Activated naive CD4-positive, alpha-beta T cell treated with anti-CD3 and anti-CD28 coated beads for 36 hours (primary cell): ENCODE measurements at regions of chr10 and their contacts with region 1.

Region 1: GRCh38 chr10:62816331-62817120 is at the start of gene EGR2:
- DNase-seq: peak; percentile 98
- H3K4me3 Mint-ChIP-seq: peak within 1 kb of the TSS; percentile 95
- H3K27ac Mint-ChIP-seq: peak within 1 kb of the TSS; percentile 98
- H3K4me1 Mint-ChIP-seq: peaks cover 41% of the 10 kb centered on the region
- H3K27me3 Mint-ChIP-seq: peaks cover 14% of the 10 kb centered on the region
- total RNA-seq, gene EGR2: 18.5 to 21.4 TPM

Region 2: DNA sequence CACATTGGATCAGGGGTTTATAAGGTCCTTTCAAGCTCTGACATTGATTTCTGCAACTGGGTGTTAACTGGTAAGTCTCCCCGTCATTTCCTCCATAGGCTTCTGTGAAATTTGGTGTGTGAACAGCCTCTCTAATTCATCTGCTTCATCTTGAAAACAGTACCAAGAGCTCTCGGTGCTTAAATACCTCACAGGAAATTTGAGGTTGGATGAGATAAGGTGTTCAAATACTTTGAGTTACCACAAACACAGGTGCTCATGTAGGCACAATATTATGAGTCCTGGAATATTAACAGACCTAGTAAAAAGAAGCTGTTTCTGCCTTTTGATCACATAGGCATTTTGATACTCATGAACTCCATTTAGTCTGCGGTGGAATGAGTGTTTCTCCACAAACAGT is 633.1 kb before region 1 on chr10:
- CTCF ChIA-PET with region 1: no interaction called
- intact Hi-C with region 1: loop called (anchors 2 kb)
- DNase-seq: peak; percentile 68
- H3K4me3 Mint-ChIP-seq: no peak overlapping the region
- H3K27ac Mint-ChIP-seq: peak overlapping the region; percentile 99
- H3K4me1 Mint-ChIP-seq: peaks cover 88% of the 10 kb centered on the region
- H3K27me3 Mint-ChIP-seq: no peaks in the 10 kb centered on the region

Region 3: DNA sequence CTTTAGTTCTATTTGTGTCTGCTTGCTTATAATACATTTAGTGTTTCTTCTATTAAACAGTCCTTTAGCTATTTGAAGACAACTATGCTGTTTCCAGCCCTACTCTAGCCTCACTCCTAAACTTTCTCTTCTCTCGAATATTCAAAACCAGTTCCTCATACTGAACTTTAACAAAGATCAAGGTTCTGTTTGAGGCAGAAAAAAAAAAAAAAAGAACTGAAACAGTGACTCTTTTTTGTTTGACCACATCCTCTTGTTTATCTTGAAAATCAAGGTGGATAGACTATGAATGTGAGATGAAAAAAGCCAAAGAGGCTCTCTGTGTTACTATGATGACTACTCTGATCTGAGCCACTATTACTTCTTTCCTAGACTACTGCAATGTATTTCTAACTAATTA is 288.1 kb before region 1 on chr10:
- CTCF ChIA-PET with region 1: no interaction called
- intact Hi-C with region 1: loop called (anchors 1 kb)
- DNase-seq: no peak
- H3K4me3 Mint-ChIP-seq: peak overlapping the region; percentile 19
- H3K27ac Mint-ChIP-seq: peak overlapping the region; percentile 26
- H3K4me1 Mint-ChIP-seq: peaks cover 37% of the 10 kb centered on the region
- H3K27me3 Mint-ChIP-seq: no peaks in the 10 kb centered on the region

Region 4: DNA sequence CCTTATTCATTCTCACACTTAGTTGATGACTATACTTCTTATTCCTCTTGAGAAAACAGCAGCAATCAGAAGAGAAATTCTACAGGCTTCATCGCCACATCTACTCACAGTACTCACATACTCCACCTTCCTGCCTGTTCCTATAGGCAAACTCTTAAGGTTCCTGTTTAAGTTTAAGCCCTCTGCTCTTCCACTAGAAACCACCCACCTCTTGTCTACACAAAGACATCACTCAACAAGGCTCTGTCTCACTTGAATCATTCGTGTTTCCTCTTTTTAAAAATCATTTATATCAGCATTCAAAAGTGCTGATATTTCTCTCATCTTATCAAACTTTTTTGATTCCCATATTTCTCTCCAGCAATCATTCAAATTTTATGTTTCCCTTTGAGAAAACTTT is 97.5 kb before region 1 on chr10:
- CTCF ChIA-PET with region 1: no interaction called
- intact Hi-C with region 1: no loop called
- DNase-seq: no peak
- H3K4me3 Mint-ChIP-seq: no peak overlapping the region
- H3K27ac Mint-ChIP-seq: no peak overlapping the region
- H3K4me1 Mint-ChIP-seq: peaks cover 5% of the 10 kb centered on the region
- H3K27me3 Mint-ChIP-seq: no peaks in the 10 kb centered on the region

Region 5: GRCh38 chr10:62732841-62733653 is 83.5 kb before region 1 on chr10:
- CTCF ChIA-PET with region 1: interaction called, 9 read pairs
- intact Hi-C with region 1: loop called (anchors 1 kb)
- DNase-seq: peak; percentile 67
- H3K4me3 Mint-ChIP-seq: peak overlapping the region; percentile 26
- H3K27ac Mint-ChIP-seq: no peak overlapping the region
- H3K4me1 Mint-ChIP-seq: peaks cover 20% of the 10 kb centered on the region
- H3K27me3 Mint-ChIP-seq: peaks cover 5% of the 10 kb centered on the region

Region 6: GRCh38 chr10:62992145-62992721 is 175.7 kb after region 1 on chr10:
- CTCF ChIA-PET with region 1: no interaction called
- intact Hi-C with region 1: loop called (anchors 1 kb)
- DNase-seq: peak; percentile 24
- H3K4me3 Mint-ChIP-seq: peak overlapping the region; percentile 1
- H3K27ac Mint-ChIP-seq: peak overlapping the region; percentile 71
- H3K4me1 Mint-ChIP-seq: peaks cover 43% of the 10 kb centered on the region
- H3K27me3 Mint-ChIP-seq: peaks cover 3% of the 10 kb centered on the region

Region 7: GRCh38 chr10:63197344-63198106 is 381.0 kb after region 1 on chr10:
- CTCF ChIA-PET with region 1: no interaction called
- intact Hi-C with region 1: no loop called
- DNase-seq: no peak
- H3K4me3 Mint-ChIP-seq: no peak overlapping the region
- H3K27ac Mint-ChIP-seq: no peak overlapping the region
- H3K4me1 Mint-ChIP-seq: peaks cover 3% of the 10 kb centered on the region
- H3K27me3 Mint-ChIP-seq: no peaks in the 10 kb centered on the region

Region 8: DNA sequence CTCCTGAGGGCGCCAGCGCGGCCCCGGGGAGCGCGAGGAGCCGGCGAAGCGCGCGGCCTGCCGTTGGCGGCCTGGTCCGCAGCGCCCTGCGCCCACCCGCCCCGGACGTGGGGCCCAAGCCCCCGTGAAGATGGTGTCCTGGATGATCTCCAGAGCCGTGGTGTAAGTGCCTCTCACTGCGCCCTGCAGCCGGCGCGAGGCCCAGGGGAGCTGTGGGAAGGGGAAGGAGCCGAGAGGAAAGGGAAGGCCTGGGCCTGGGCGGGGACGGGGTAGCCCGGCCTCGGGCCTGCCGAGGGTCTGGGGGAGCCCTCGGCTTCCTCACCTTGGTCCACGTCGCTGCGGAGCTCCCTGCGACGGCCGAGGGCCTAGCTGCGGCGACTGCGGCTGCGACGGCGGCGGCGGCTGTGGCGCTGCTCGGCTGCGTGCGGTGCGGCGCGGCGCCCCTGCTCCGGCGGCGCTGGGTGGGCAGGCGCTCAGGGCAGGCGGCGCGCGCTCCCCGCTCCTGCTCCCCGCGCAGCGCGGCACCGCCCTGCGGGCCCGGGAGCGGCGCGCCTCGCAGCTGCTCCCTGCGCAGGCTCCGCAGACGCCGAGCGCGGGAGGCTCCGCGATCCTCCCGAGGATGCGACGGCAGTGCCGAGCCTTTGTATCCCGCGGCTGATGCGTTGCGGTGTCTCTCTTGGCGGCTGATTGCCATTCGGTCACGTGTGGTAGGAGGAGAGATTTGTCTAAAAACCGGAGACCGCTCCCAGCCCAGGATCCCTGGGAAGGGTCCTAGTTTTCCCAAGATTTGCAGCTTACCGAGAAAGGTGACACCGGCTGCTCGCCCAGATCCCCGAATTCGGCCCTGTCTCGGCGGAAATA is 705.1 kb after region 1 on chr10:
- CTCF ChIA-PET with region 1: no interaction called
- intact Hi-C with region 1: loop called (anchors 5 kb)
- DNase-seq: peak; percentile 59
- H3K4me3 Mint-ChIP-seq: peak overlapping the region; percentile 84
- H3K27ac Mint-ChIP-seq: peak overlapping the region; percentile 86
- H3K4me1 Mint-ChIP-seq: peaks cover 66% of the 10 kb centered on the region
- H3K27me3 Mint-ChIP-seq: no peaks in the 10 kb centered on the region